Left cardiac atrium (tissue), 4 donors: ENCODE measurements at regions of chr21 and their contacts with region 1.

Region 1: GRCh38 chr21:33127154-33127893 is 57.4 kb downstream of the OLIG1 start:
- DNase-seq: peak; percentile 53
- ATAC-seq: peak; percentile 92 to 94

Region 2: DNA sequence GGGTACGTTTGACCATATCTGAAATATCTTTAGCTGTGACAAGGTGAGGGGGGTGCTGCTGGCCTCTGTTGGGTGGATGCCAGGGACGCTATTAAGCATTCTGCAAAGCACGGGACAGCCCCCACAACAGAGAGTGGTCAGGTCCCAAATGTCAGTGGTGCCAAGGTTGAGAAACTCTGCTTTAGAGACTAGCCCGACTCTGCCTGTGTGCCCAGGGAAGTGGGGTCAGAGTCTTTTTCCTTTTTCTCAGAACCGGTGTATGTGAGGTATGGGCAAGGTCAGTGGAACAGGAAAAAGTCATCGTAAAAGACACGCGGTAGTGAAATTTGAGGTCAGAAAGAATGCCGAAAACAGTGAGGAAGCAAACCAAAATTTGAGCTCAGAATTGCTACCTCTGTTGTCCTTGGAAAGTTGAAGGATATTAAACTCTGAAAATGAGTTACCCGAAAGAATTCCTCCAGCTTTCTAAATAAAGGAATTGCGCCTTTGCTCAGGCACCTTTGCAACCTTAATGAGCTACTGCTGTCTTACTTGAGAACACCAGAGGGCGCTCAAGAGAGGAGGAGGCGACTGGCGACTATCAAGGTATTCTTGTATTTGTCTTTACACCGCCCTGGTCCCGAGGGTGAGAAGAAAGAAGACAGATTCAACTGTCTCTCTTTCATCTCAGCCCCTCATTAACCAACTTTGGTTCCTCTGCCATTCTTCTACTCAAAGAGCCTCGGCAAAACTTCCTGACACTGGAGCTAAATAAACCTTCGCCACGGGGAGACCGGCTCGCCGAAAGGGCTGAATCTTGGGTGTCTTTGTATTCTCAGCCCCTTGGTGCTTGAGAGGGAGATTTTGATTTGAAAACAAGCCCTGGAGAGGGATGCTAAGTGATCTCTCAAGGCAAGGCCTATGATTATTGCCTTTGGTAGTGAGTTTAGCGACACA is 187.0 kb before region 1 on chr21:
- intact Hi-C with region 1: loop called in 1 of 2 experiments (anchors 5 kb)
- DNase-seq: peak; percentile 26
- ATAC-seq: peak; percentile 59 to 70

Region 3: GRCh38 chr21:32994305-32994704 is 133.0 kb before region 1 on chr21:
- intact Hi-C with region 1: loop called in 1 of 2 experiments (anchors 5 kb)
- DNase-seq: no peak
- ATAC-seq: no peak